ENCODE measurements at regions of chr7 and their contacts with region 1.

Region 1: DNA sequence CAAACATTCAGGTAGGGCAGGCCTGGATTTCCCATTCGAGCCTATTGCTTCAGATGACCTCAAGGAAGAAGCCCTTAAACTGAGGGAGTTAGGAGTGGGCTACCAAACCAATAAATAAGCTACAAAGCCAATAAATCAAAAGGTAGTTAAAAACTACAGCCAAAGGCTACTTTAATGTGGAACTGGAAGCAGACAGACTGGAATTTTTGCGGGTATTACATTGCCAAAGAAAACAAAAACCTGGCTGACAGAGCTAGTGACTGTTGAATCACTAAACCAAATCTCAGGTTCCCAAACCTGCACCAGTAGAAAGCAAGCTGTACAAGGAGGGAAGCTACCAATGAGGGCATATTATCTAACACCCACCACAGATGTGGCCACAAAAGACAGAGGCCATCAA is 315.6 kb downstream of the GRM8 start:
- DNase-seq: peak; percentile 15
- H3K4me3 Mint-ChIP-seq: no peak overlapping the region
- H3K27ac Mint-ChIP-seq: peak overlapping the region; percentile 37
- H3K4me1 Mint-ChIP-seq: peaks cover 63% of the 10 kb centered on the region
- H3K27me3 Mint-ChIP-seq: no peaks in the 10 kb centered on the region
- CTCF ChIP-seq: no peak

Region 2: GRCh38 chr7:127021019-127021738 is 84.0 kb after region 1 on chr7:
- CTCF ChIA-PET with region 1: no interaction called
- intact Hi-C with region 1: loop called (anchors 5 kb)
- DNase-seq: no peak
- H3K4me3 Mint-ChIP-seq: no peak overlapping the region
- H3K27ac Mint-ChIP-seq: no peak overlapping the region
- H3K4me1 Mint-ChIP-seq: peaks cover 9% of the 10 kb centered on the region
- H3K27me3 Mint-ChIP-seq: no peaks in the 10 kb centered on the region
- CTCF ChIP-seq: no peak

Region 3: DNA sequence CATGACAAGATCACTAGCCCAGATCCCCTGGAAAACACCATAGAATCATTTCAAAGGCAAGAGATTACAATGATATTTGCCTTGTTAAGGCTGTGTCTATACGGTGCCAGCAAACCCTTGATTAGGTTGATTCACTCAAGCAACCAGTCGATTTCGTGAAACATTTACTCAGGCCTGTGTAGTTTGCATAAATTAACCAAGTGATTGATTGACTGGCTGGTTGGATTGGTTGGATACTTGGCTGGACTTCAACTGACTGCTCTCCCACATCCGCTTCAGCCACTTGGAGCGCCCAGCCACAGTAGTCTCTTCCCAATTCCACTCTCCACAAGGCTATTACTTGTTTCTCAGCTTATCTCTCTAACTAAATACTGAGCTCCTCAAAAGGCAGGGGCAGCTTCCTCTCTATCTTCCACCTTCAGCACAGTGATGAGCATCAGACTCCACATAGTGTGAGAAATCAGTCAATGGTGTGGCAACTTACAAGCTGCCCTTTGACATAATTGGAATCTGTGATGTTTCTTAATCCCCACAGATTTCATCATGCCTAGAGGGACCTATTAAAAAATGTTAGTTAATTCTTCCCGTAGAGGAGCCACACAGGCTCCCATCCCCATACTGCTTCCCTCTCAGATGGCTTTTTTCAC is 98.2 kb after region 1 on chr7:
- CTCF ChIA-PET with region 1: no interaction called
- intact Hi-C with region 1: loop called (anchors 2 kb)
- DNase-seq: peak; percentile 72
- H3K4me3 Mint-ChIP-seq: peak overlapping the region; percentile 28
- H3K27ac Mint-ChIP-seq: peak overlapping the region; percentile 48
- H3K4me1 Mint-ChIP-seq: peaks cover 33% of the 10 kb centered on the region
- H3K27me3 Mint-ChIP-seq: peaks cover 12% of the 10 kb centered on the region
- CTCF ChIP-seq: no peak